ENCODE measurements at regions of chr15 and their contacts with region 1.

Region 1: GRCh38 chr15:28123408-28124023 is 24.4 kb upstream of the OCA2 start:
- DNase-seq: peak; percentile 33
- H3K4me3 ChIP-seq: no peak overlapping the region
- H3K27ac ChIP-seq: no peak overlapping the region
- H3K27me3 ChIP-seq: no peaks in the 10 kb centered on the region
- CTCF ChIP-seq: peak; percentile 86

Region 2: DNA sequence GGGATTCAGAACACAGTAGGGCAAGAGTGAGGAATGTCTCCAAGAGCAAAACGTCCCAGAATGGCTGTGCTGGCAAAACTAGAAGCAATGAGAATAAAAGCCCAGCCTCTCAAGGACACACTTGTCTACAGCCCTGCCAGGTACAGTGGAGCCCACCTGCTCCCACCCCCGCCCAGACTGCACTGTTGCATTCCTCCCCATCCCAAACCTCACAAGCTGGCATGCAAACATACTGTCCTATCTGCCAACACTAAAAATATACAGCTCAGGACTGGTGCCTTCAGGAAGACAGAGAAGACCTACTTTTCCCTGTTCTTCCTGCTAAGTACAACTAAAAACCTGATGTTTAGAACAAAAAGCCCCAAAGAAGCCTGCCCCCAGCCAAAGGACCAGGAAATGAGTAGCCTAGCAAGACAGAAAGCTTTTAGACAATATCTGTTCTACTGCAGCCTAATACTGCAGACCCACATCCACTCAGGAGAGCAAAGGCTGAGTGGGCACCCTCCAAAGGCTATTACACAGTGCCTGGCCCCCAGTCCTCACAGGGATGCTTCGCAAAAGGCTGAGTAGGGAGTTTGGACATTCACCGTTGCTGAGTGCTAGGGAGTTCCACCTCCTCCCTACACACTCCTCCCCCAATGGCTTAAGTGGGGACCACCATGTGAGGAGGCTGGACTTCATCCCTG is 37.9 kb before region 1 on chr15:
- CTCF ChIA-PET with region 1: interaction called, 10 read pairs
- POLR2A ChIA-PET with region 1: no interaction called
- DNase-seq: no peak
- H3K4me3 ChIP-seq: no peak overlapping the region
- H3K27ac ChIP-seq: no peak overlapping the region
- H3K27me3 ChIP-seq: peaks cover 4% of the 10 kb centered on the region
- CTCF ChIP-seq: no peak

Region 3: GRCh38 chr15:28098766-28099554 is 24.6 kb before region 1 on chr15 and contains the start of gene OCA2:
- CTCF ChIA-PET with region 1: interaction called, 11 read pairs
- POLR2A ChIA-PET with region 1: no interaction called
- DNase-seq: no peak
- H3K4me3 ChIP-seq: peak within 1 kb of the TSS; percentile 22; the same call in 1 of the 2 replicates
- H3K27ac ChIP-seq: no peak within 1 kb of the TSS
- H3K27me3 ChIP-seq: peaks cover 61% of the 10 kb centered on the region
- CTCF ChIP-seq: peak; percentile 36; the same call in 1 of the 2 replicates
- polyA plus RNA-seq, gene OCA2: not detected in 2 replicates

Region 4: GRCh38 chr15:28107111-28107888 is 16.2 kb before region 1 on chr15:
- CTCF ChIA-PET with region 1: interaction called, 25 read pairs
- POLR2A ChIA-PET with region 1: no interaction called
- DNase-seq: no peak
- H3K4me3 ChIP-seq: peak overlapping the region; percentile 63
- H3K27ac ChIP-seq: no peak overlapping the region
- H3K27me3 ChIP-seq: peaks cover under 1% of the 10 kb centered on the region
- CTCF ChIP-seq: no peak

Region 5: DNA sequence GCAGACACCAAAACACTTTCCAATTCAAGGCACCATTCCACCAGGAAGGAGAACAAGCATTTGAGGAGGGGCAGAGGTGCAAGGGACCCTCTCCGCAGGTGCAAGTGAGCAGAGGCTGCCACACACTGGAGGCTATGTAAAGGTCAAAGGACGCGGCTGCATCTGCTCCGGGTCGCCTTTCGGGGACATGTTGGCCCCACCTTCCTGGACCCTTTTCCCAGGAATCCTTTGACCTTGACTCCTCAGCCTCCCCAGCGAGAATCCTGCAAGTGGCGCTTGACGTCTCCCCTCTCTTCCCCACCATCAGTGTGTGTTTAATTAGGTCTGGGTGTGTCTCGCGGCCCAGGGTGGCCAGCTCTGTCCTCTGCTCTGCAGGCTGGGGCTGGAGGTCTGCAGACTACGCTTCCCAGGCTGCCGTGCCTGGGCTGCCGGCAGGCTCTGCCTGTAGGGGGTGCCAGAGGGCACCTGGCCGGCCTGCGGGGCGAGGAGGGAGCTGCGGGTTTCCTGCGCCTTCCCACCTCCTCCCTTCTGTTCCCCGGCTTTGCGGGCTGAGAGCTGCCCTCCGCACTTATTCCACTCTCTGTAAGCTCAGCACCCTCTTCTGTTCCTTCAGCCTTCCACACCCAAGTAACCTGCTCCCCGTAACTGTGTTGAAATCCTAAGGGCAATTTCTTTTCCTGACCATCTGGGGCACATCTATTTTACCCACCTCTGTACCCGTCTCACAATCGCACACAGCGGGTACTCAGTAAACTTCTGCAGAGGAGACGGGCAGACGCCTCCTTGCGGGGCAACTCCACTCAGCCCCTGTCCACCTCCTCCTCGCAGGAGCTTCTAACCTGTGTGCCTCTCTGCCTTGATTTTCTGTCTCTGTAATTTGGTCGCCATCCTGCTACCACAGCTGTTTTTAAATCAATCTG is 1016.3 kb after region 1 on chr15:
- CTCF ChIA-PET with region 1: no interaction called
- POLR2A ChIA-PET with region 1: no interaction called
- DNase-seq: no peak
- H3K4me3 ChIP-seq: no peak overlapping the region
- H3K27ac ChIP-seq: no peak overlapping the region
- H3K27me3 ChIP-seq: peaks cover 3% of the 10 kb centered on the region
- CTCF ChIP-seq: peak; percentile 86